Activated CD4-positive, alpha-beta T cell treated with anti-CD3 and anti-CD28 coated beads, Interleukin-2, amount 10 ng/mL, durations not matched to agents 24 days and 14 days (primary cell): ENCODE measurements at regions of chr10 and their contacts with region 1.

Region 1: GRCh38 chr10:88990384-88991160 is at the start of gene FAS:
- DNase-seq: peak; percentile 94
- H3K4me3 Mint-ChIP-seq: peak within 1 kb of the TSS; percentile 96
- H3K27ac Mint-ChIP-seq: peak within 1 kb of the TSS; percentile 97
- H3K4me1 Mint-ChIP-seq: peaks cover 59% of the 10 kb centered on the region
- H3K27me3 Mint-ChIP-seq: no peaks in the 10 kb centered on the region
- total RNA-seq, gene FAS: 29.9 and 31.1 TPM in 2 replicates

Region 2: GRCh38 chr10:88835096-88835909 is 155.3 kb before region 1 on chr10:
- intact Hi-C with region 1: loop called (anchors 5 kb)
- DNase-seq: peak; percentile 96
- H3K4me3 Mint-ChIP-seq: no peak overlapping the region
- H3K27ac Mint-ChIP-seq: no peak overlapping the region
- H3K4me1 Mint-ChIP-seq: peaks cover 31% of the 10 kb centered on the region
- H3K27me3 Mint-ChIP-seq: no peaks in the 10 kb centered on the region

Region 3: GRCh38 chr10:88901206-88901983 is 89.2 kb before region 1 on chr10:
- intact Hi-C with region 1: loop called (anchors 2 kb)
- DNase-seq: no peak
- H3K4me3 Mint-ChIP-seq: peak overlapping the region; percentile 71
- H3K27ac Mint-ChIP-seq: peak overlapping the region; percentile 93
- H3K4me1 Mint-ChIP-seq: peaks cover 47% of the 10 kb centered on the region
- H3K27me3 Mint-ChIP-seq: no peaks in the 10 kb centered on the region

Region 4: DNA sequence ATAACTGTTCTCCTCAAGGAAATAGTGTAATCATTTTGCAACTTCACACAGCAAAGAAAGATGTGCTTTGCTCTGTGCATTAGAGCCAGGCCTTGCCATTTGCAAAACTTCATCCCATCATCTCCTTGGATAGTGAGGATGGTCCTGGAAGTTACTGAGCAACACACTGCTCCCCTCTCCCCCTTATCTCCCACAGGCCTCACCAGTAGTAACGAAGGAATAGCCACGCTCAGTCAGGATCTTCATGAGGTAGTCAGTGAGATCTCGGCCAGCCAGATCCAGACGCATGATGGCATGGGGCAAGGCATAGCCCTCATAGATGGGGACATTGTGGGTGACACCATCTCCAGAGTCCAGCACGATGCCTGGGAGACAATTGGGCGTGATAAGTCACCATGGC is 49.5 kb before region 1 on chr10:
- intact Hi-C with region 1: no loop called
- DNase-seq: no peak
- H3K4me3 Mint-ChIP-seq: no peak overlapping the region
- H3K27ac Mint-ChIP-seq: no peak overlapping the region
- H3K4me1 Mint-ChIP-seq: peaks cover 11% of the 10 kb centered on the region
- H3K27me3 Mint-ChIP-seq: no peaks in the 10 kb centered on the region

Region 5: GRCh38 chr10:88960802-88961201 is 29.8 kb before region 1 on chr10:
- intact Hi-C with region 1: loop called (anchors 2 kb)
- DNase-seq: no peak
- H3K4me3 Mint-ChIP-seq: no peak overlapping the region
- H3K27ac Mint-ChIP-seq: no peak overlapping the region
- H3K4me1 Mint-ChIP-seq: peaks cover 27% of the 10 kb centered on the region
- H3K27me3 Mint-ChIP-seq: peaks cover 10% of the 10 kb centered on the region

Region 6: GRCh38 chr10:89001024-89001728 is 10.6 kb after region 1 on chr10:
- intact Hi-C with region 1: loop called (anchors 1 kb)
- DNase-seq: peak; percentile 79
- H3K4me3 Mint-ChIP-seq: peak overlapping the region; percentile 82
- H3K27ac Mint-ChIP-seq: peak overlapping the region; percentile 91
- H3K4me1 Mint-ChIP-seq: peaks cover 60% of the 10 kb centered on the region
- H3K27me3 Mint-ChIP-seq: no peaks in the 10 kb centered on the region

Region 7: DNA sequence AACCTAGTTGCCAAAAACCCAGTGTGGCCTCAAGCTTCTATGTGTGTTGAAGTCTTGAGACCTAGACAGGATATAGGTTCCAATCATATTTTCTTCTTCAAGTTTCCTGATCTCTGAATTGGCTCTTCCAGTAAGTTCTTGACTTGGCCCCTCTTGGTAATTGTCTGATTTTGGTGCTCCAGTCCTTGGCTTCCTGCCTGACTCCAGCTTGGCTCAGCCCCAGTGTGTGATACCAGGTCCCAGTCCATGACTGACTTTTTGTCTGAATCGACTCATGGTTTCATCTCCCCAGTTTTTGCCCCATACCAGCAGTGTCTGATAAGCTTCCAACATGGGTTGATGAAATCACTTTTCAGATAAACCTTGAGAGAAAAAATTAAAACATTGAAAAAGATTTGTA is 72.3 kb after region 1 on chr10:
- intact Hi-C with region 1: no loop called
- DNase-seq: no peak
- H3K4me3 Mint-ChIP-seq: no peak overlapping the region
- H3K27ac Mint-ChIP-seq: no peak overlapping the region
- H3K4me1 Mint-ChIP-seq: no peaks in the 10 kb centered on the region
- H3K27me3 Mint-ChIP-seq: peaks cover 56% of the 10 kb centered on the region

Region 8: DNA sequence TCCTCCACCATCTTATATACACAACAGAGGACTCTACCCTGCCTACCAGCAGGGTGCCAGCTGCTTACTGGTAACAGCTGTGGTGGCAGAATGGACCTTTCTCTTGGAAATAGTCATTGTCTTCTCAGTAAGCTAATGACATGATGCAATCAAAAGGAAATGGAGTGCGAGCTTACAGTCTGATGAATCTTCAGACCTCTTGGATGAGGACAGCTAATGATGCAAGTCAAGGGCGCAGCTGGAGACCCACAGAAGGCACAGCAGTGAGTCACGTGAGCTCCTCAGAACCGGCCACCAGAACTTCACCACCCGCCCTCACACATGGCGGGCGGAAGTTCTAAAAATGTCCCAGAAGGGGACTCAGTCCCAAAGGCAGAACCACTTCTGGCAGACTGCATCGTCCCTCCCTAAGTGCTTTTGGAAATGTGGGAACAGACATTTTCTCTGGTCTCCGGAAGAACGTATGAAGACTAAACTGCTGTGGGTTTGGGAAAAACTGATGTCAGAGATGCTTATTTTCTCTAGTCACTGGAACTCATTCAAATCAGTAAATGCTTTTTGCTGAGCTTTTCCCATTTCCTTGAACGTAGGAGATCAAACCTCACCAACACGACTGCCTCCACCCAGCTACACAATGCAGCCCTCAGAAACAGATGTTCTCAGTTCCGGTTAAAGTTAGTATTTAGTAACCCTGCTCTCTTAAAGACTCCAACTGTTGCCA is 96.4 kb after region 1 on chr10:
- intact Hi-C with region 1: loop called (anchors 2 kb)
- DNase-seq: peak; percentile 53
- H3K4me3 Mint-ChIP-seq: no peak overlapping the region
- H3K27ac Mint-ChIP-seq: no peak overlapping the region
- H3K4me1 Mint-ChIP-seq: peaks cover 9% of the 10 kb centered on the region
- H3K27me3 Mint-ChIP-seq: peaks cover 8% of the 10 kb centered on the region